ENCODE measurements at regions of chr13 and their contacts with region 1.

Region 1: GRCh38 chr13:48078251-48078656 is 16.6 kb downstream of the MED4 start:
- DNase-seq: peak; percentile 24
- ATAC-seq: peak; percentile 100
- H3K4me3 Mint-ChIP-seq: no peak overlapping the region
- H3K27ac Mint-ChIP-seq: peak overlapping the region; percentile 61
- H3K4me1 Mint-ChIP-seq: peaks cover 10% of the 10 kb centered on the region
- H3K27me3 Mint-ChIP-seq: no peaks in the 10 kb centered on the region
- CTCF ChIP-seq: no peak

Region 2: DNA sequence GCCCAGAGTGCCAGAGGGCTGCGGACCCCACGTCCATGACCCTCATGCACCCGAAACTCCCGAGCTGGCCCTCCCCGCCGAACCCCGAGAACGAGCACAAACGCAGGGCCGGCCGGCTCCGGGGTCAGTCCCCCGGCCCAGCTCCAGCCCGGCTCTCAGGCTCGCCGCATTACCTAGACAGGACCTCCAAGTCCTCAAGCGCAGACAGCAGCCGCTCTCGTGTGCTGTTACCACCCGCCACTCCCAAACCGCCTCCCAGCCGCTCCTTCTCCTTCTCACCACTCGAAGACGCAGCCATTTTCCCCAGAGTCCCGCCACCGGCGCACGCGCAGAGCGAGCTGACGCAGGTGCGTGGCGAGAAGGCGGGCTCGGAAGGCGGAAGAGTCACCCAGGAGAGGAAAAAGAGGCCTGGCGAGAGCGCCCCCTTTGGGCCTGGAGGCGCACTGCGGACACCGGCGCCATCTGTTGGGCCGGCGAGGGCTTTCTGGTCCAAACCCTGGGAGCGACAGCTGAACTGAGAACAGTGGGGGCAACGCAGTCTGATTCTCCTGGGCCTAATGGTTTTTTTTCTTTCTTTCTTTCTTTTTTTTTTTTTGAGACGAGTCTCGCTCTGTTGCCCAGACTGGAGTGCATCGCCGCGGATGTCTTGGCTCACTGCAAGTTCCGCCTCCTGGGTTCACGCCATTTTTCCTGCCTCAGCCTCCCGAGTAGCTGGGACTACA is 16.7 kb after region 1 on chr13 and contains the start of gene MED4:
- CTCF ChIA-PET with region 1: interaction called, 15 read pairs
- POLR2A ChIA-PET with region 1: interaction called, 5 read pairs
- intact Hi-C with region 1: loop called (anchors 1 kb)
- DNase-seq: peak; percentile 99
- ATAC-seq: peak; percentile 99
- H3K4me3 Mint-ChIP-seq: peak within 1 kb of the TSS; percentile 96
- H3K27ac Mint-ChIP-seq: peak within 1 kb of the TSS; percentile 90
- H3K4me1 Mint-ChIP-seq: peaks cover 34% of the 10 kb centered on the region
- H3K27me3 Mint-ChIP-seq: peaks cover 5% of the 10 kb centered on the region
- CTCF ChIP-seq: peak; percentile 84
- total RNA-seq, gene MED4: 50.4 and 51.9 TPM in 2 replicates

Region 3: GRCh38 chr13:48647630-48648029 is 569.4 kb after region 1 on chr13:
- CTCF ChIA-PET with region 1: no interaction called
- POLR2A ChIA-PET with region 1: no interaction called
- intact Hi-C with region 1: loop called (anchors 5 kb)
- DNase-seq: no peak
- ATAC-seq: peak; percentile 31
- H3K4me3 Mint-ChIP-seq: no peak overlapping the region
- H3K27ac Mint-ChIP-seq: no peak overlapping the region
- H3K4me1 Mint-ChIP-seq: no peaks in the 10 kb centered on the region
- H3K27me3 Mint-ChIP-seq: peaks cover 16% of the 10 kb centered on the region
- CTCF ChIP-seq: no peak

Measured in activated B cell treated with CpG ODN at 0.5 μM for 24 hours (primary cell).